ENCODE measurements at regions of chr9 and their contacts with region 1.

Region 1: GRCh38 chr9:893843-894420 is 52.4 kb downstream of the DMRT1 start:
- DNase-seq: peak; percentile 4 to 78 (median 24)
- ATAC-seq: peak; percentile 86
- H3K4me3 ChIP-seq: peak overlapping the region; percentile 12
- H3K4me3 Mint-ChIP-seq: peak overlapping the region; percentile 42
- H3K27ac ChIP-seq: no peak overlapping the region
- H3K27ac Mint-ChIP-seq: no peak overlapping the region
- H3K4me1 ChIP-seq: peaks cover 11% of the 10 kb centered on the region
- H3K4me1 Mint-ChIP-seq: peaks cover 10% of the 10 kb centered on the region
- H3K27me3 ChIP-seq: peaks cover 0 to 3% of the 10 kb centered on the region in 2 experiments
- H3K27me3 Mint-ChIP-seq: peaks cover 20% of the 10 kb centered on the region
- CTCF ChIP-seq: peak; percentile 70

Region 2: DNA sequence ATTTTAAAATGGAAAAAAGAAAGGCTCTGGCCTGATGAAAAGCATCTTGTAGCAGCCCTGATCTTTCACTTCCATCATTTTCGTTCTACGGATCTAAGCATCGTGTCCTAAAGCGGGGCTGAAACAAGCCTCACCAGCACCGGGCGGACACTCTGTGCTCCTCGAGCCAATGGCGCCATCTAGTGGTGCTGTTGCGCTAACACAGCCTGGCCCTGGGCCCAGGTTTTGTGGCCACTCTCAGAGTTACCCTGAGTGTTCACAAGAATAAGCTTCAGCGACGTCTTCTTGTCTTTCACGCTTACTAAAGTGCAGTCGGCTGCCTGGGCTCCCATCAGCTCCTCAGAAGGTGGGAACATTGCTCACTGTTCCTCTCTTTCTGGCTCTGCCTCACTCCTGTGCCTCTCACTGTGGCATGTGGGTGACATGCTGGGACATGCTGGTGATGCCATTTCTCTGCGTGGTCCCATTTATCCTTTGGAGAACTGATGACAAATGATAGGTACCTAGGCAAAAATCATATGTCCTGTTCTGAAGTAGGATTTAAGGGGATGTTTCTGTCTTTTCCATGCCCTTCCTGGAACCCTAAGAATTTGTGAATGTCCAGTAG is 115.3 kb after region 1 on chr9:
- CTCF ChIA-PET with region 1: interaction called, 3 read pairs
- POLR2A ChIA-PET with region 1: no interaction called
- intact Hi-C with region 1: loop called (anchors 2 kb)
- DNase-seq: peak; percentile 30 to 82 (median 65)
- ATAC-seq: peak; percentile 73
- H3K4me3 ChIP-seq: no peak overlapping the region
- H3K4me3 Mint-ChIP-seq: no peak overlapping the region
- H3K27ac ChIP-seq: no peak overlapping the region
- H3K27ac Mint-ChIP-seq: no peak overlapping the region
- H3K4me1 ChIP-seq: peaks cover 4% of the 10 kb centered on the region
- H3K4me1 Mint-ChIP-seq: no peaks in the 10 kb centered on the region
- H3K27me3 ChIP-seq: peaks cover 4 to 11% of the 10 kb centered on the region in 2 experiments
- H3K27me3 Mint-ChIP-seq: peaks cover 65% of the 10 kb centered on the region
- CTCF ChIP-seq: peak; percentile 66